AG04450 (cell line): ENCODE measurements at regions of chr10 and their contacts with region 1.

Region 1: GRCh38 chr10:100878291-100878910 is 34.4 kb upstream of the SLF2 start:
- DNase-seq: peak; percentile 51
- H3K4me3 ChIP-seq: no peak overlapping the region
- H3K27ac ChIP-seq: no peak overlapping the region
- H3K27me3 ChIP-seq: no peaks in the 10 kb centered on the region
- CTCF ChIP-seq: peak; percentile 85

Region 2: GRCh38 chr10:100338434-100339036 is 539.9 kb before region 1 on chr10:
- CTCF ChIA-PET with region 1: interaction called, 28 read pairs
- POLR2A ChIA-PET with region 1: no interaction called
- DNase-seq: no peak
- H3K4me3 ChIP-seq: no peak overlapping the region
- H3K27ac ChIP-seq: no peak overlapping the region
- H3K27me3 ChIP-seq: peaks cover 12% of the 10 kb centered on the region
- CTCF ChIP-seq: peak; percentile 96

Region 3: GRCh38 chr10:100508691-100509150 is 369.7 kb before region 1 on chr10:
- CTCF ChIA-PET with region 1: interaction called, 15 read pairs
- POLR2A ChIA-PET with region 1: no interaction called
- DNase-seq: peak; percentile 24
- H3K4me3 ChIP-seq: no peak overlapping the region
- H3K27ac ChIP-seq: no peak overlapping the region
- H3K27me3 ChIP-seq: no peaks in the 10 kb centered on the region
- CTCF ChIP-seq: peak; percentile 78

Region 4: GRCh38 chr10:100562008-100562711 is 316.2 kb before region 1 on chr10:
- CTCF ChIA-PET with region 1: interaction called, 66 read pairs
- POLR2A ChIA-PET with region 1: interaction called, 5 read pairs
- DNase-seq: no peak
- H3K4me3 ChIP-seq: no peak overlapping the region
- H3K27ac ChIP-seq: no peak overlapping the region
- H3K27me3 ChIP-seq: peaks cover 37% of the 10 kb centered on the region
- CTCF ChIP-seq: peak; percentile 72

Region 5: DNA sequence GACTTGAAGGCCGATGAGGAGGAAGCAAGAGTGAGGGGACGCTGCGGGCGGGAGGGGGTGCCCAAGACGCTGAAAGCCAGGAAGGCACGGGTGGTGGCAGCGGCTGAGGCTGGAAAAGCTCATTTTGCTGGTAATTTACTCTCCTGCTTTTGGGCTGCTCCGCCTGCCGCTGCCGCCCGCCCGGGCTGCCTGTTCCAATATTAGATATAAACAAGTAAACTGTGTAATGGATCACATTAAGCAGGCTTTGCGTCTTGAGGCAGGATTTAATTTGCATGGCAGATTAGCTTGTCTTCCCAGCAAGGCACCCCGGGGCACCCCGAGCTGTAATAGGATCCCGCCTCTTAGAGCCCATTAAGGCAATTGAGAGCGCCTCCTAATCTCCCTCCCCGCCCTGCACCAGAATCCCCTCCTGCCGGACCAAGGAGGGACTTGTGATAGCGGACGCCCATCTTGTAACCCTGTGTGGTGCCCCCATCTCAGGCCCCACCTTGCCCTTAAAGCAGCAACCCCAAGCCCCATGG is 11.8 kb before region 1 on chr10:
- CTCF ChIA-PET with region 1: interaction called, 14 read pairs
- POLR2A ChIA-PET with region 1: no interaction called
- DNase-seq: no peak
- H3K4me3 ChIP-seq: no peak overlapping the region
- H3K27ac ChIP-seq: no peak overlapping the region
- H3K27me3 ChIP-seq: peaks cover 39% of the 10 kb centered on the region
- CTCF ChIP-seq: no peak

Region 6: GRCh38 chr10:100998991-100999741 is 120.8 kb after region 1 on chr10:
- CTCF ChIA-PET with region 1: no interaction called
- POLR2A ChIA-PET with region 1: no interaction called
- DNase-seq: no peak
- H3K4me3 ChIP-seq: peak overlapping the region; percentile 90
- H3K27ac ChIP-seq: peak overlapping the region; percentile 95
- H3K27me3 ChIP-seq: no peaks in the 10 kb centered on the region
- CTCF ChIP-seq: peak; percentile 76